ENCODE measurements at regions of chr1 and their contacts with region 1.

Region 1: DNA sequence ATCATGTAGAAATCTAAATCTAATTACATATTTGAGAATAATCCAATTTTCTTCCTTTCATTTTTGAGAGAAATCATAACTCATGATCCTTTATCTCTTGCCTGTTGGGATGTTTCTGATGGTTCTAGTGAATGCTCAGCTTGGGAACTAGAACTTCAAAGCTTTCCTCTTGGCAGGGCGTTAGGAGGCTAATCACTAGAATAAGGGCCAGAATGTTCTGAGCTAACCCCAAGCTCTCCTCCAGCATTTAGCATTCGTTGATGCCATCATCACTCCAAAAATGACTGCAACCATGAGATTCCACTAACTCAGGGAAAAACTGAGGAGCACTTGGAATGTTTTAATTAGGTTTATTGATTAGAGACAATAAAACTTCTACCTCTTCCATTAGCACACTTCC is 93.9 kb upstream of the DPT start:
- DNase-seq: no peak
- ATAC-seq: no peak
- H3K4me3 ChIP-seq: no peak overlapping the region
- H3K27ac ChIP-seq: no peak overlapping the region
- H3K4me1 ChIP-seq: no peaks in the 10 kb centered on the region
- H3K27me3 ChIP-seq: no peaks in the 10 kb centered on the region
- CTCF ChIP-seq: no peak

Region 2: GRCh38 chr1:167899253-167899681 is 923.6 kb before region 1 on chr1:
- intact Hi-C with region 1: no loop called
- DNase-seq: peak; percentile 69 to 86
- ATAC-seq: peak; percentile 74 to 96 (median 88)
- H3K4me3 ChIP-seq: no peak overlapping the region
- H3K27ac ChIP-seq: no peak overlapping the region
- H3K4me1 ChIP-seq: peaks cover 5% of the 10 kb centered on the region
- H3K27me3 ChIP-seq: no peaks in the 10 kb centered on the region
- CTCF ChIP-seq: no peak

Region 3: DNA sequence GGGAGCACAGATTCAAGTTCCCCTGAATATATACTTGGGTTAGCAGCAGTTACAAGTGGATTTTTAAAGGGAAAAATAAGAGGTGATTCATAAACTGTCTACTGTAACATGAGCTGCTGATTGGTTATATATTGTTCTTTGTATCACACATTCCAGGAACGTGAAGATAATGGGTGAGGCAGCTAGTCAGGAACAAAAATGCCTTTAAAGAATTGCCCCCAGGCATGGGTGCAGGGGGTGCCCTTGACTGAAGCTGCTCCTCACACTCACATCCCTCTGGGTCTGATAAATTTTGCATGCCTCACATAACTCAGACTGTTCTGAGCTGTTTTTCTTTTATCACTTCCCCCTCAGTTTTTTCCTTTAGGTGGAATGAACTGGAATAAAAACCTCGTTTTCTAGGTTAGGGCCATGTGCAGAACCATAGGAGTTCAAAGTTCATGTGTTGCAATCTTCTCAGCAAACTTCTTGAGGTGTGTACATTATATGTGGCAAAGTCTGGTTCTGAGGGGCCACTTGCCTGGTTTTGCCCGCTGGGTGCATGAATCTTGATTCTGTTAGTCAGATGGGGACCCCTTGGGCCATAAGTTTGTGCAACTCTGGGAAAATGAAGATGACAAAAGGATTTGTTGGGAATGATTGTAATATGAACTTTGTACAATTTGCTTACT is 521.1 kb before region 1 on chr1:
- intact Hi-C with region 1: no loop called
- DNase-seq: no peak
- ATAC-seq: no peak
- H3K4me3 ChIP-seq: no peak overlapping the region
- H3K27ac ChIP-seq: no peak overlapping the region
- H3K4me1 ChIP-seq: no peaks in the 10 kb centered on the region
- H3K27me3 ChIP-seq: no peaks in the 10 kb centered on the region
- CTCF ChIP-seq: no peak

Region 4: DNA sequence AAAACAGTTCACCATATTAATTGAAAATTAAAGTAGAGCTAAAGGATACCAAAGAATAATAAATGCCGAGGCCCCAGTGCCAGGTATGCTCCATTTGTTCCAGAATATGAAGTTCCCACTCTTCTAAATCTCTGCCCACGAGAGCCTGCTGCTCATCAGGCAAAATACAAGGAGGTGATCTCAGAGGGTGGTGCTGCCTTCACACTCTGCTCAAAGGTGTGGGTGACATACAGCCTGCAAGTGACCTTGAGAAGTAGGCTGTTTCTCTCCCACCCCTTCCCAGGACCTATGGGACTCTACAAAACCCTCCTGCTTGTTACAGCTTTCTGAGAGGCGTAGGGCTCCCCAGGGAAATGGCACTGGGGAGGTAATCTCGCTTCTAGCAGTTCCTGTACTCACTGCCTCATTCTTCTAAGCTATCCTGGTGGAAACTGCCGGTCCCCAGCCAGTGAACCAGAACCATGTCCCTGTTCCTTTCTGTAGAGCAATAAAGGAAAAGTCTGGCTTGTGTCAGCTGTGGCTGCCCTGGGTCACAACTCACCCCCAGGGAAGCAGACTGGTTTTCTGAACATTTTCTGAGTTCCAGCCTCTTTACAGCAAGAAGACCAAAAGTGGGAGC is 67.0 kb before region 1 on chr1:
- intact Hi-C with region 1: loop called in 1 of 2 experiments (anchors 2 kb)
- DNase-seq: no peak
- ATAC-seq: no peak
- H3K4me3 ChIP-seq: no peak overlapping the region
- H3K27ac ChIP-seq: no peak overlapping the region
- H3K4me1 ChIP-seq: no peaks in the 10 kb centered on the region
- H3K27me3 ChIP-seq: no peaks in the 10 kb centered on the region
- CTCF ChIP-seq: no peak

Measured in psoas muscle (tissue), 8 donors.